Sciatic nerve (tissue), 2 donors: ENCODE measurements at regions of chr7 and their contacts with region 1.

Region 1: GRCh38 chr7:52273685-52274610 is 761.5 kb upstream of the POM121L12 start:
- DNase-seq: peak; percentile 57
- ATAC-seq: peak; percentile 32

Region 2: GRCh38 chr7:52143219-52143618 is 130.7 kb before region 1 on chr7:
- intact Hi-C with region 1: no loop called
- DNase-seq: no peak
- ATAC-seq: no peak

Region 3: GRCh38 chr7:52184006-52184703 is 89.8 kb before region 1 on chr7:
- intact Hi-C with region 1: no loop called
- DNase-seq: no peak
- ATAC-seq: no peak

Region 4: DNA sequence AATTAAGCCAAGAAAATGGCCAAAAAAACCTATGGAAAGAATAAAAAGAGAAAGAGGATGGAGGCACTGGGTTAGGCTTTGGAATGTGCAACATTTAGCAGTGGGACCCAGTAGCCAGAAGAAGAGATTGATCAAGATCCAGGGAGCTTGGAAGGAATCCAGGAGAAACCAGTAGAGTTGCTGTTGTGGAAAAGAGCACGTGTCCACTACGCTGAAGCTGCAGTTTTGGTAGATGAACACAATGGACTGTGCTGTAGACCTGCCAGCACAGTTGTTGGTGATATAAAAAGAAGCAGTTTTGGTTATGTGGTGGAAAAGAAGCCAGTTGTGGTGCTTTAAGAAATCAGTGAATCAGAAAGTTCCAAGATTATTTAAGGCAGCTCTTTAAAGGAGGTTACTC is 40.7 kb before region 1 on chr7:
- intact Hi-C with region 1: loop called (anchors 1 kb)
- DNase-seq: no peak
- ATAC-seq: no peak